CD8-positive, alpha-beta memory T cell (primary cell): ENCODE measurements at regions of chr2 and their contacts with region 1.

Region 1: DNA sequence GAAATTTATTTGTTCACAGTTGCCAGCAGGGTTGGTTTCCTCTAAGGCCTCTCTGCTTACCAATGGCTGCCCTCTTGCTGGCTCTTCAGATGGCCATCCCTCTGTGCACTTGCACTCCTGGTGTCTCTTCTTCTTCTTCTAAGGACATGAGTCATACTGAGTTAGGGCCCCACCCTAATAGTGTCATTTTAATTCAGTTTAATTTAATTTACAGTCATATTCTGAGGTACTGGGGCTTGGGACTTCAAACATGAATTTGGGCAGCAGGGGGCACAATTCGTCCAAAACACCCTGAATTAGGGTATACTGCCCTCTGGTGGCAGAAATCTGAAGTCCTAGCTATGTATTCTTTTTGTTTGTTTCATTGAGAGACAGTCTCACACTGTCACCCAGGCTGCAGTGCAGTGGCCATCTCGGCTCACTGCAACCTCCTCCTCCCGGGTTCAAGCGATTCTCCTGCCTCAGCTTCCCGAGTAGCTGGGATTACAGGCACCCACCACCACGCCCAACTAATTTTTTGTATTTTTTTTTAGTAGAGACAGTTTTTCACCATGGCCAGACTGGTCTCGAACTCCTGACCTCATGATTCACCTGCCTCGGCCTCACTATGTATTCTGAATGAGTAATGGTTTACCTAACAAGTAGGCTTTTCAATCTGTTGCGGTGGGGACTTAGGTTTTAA is 19.8 kb downstream of the SLC4A1AP start:
- DNase-seq: peak; percentile 78 to 85 (median 82)
- H3K4me3 ChIP-seq: no peak overlapping the region
- H3K4me3 Mint-ChIP-seq: peak overlapping the region in 6 of 7 donors; percentile 30 to 82 (median 59)
- H3K27ac ChIP-seq: peak overlapping the region; percentile 1
- H3K27ac Mint-ChIP-seq: peak overlapping the region; percentile 79 to 99 (median 94)
- H3K4me1 ChIP-seq: peaks cover 24% of the 10 kb centered on the region
- H3K4me1 Mint-ChIP-seq: peaks cover 26 to 31% (median 31%) of the 10 kb centered on the region in 3 donors
- H3K27me3 ChIP-seq: no peaks in the 10 kb centered on the region
- H3K27me3 Mint-ChIP-seq: peaks cover 0 to 1% of the 10 kb centered on the region in 2 donors

Region 2: DNA sequence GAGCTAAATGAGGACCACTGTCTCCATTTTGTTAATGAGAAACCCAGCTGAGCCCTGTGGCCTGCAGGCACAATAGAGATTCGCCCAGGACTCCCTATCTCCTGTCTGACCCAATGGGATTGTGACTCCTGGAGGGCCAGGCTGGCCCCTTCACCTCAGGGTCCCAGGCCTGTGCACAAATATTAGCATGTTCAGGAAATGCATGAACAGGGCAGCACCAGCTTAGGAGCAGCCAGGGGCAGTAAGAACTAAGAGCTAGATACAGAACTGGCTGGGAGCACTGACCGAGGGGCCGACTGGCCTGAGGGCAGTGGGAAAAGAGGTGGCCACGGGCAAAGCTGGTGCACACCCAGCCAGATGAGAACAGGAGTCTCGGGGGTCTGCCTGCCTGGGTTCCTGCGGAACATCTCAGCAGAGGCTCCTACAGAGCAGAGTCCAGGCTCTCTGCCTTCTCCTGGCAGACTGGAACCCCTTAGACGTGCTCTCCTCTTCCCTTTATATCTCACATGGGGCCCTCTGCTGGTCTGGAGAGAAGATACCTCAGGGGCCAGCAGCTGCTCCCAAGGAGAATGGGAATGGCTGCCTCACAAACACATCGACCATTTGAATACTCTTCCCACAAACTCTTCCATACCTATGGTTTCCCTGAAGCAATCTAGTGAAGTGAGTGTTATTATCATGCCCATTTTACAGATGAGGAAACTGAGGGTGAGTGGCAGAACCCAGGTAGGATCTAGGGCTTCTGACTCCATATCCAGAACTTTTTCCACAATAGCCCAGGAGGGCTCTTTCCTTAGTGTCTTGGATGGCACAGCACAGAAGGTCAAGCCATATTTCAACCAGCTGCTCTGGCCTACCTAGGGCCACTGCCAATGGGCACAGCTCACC is 1128.0 kb before region 1 on chr2:
- CTCF ChIA-PET with region 1: no interaction called
- POLR2A ChIA-PET with region 1: no interaction called
- DNase-seq: no peak
- H3K4me3 ChIP-seq: no peak overlapping the region
- H3K4me3 Mint-ChIP-seq: no peak overlapping the region
- H3K27ac ChIP-seq: no peak overlapping the region
- H3K27ac Mint-ChIP-seq: no peak overlapping the region
- H3K4me1 ChIP-seq: no peaks in the 10 kb centered on the region
- H3K4me1 Mint-ChIP-seq: no peaks in the 10 kb centered on the region
- H3K27me3 ChIP-seq: no peaks in the 10 kb centered on the region
- H3K27me3 Mint-ChIP-seq: peaks cover 26 to 60% of the 10 kb centered on the region in 2 donors

Region 3: GRCh38 chr2:27335311-27335710 is 348.2 kb before region 1 on chr2:
- CTCF ChIA-PET with region 1: no interaction called
- POLR2A ChIA-PET with region 1: interaction called, 11 read pairs
- DNase-seq: no peak
- H3K4me3 ChIP-seq: no peak overlapping the region
- H3K4me3 Mint-ChIP-seq: no peak overlapping the region
- H3K27ac ChIP-seq: no peak overlapping the region
- H3K27ac Mint-ChIP-seq: peak overlapping the region in 4 of 8 donors; percentile 18 to 32 (median 26)
- H3K4me1 ChIP-seq: no peaks in the 10 kb centered on the region
- H3K4me1 Mint-ChIP-seq: no peaks in the 10 kb centered on the region
- H3K27me3 ChIP-seq: no peaks in the 10 kb centered on the region
- H3K27me3 Mint-ChIP-seq: no peaks in the 10 kb centered on the region

Region 4: GRCh38 chr2:27606611-27607010 is 76.9 kb before region 1 on chr2:
- CTCF ChIA-PET with region 1: no interaction called
- POLR2A ChIA-PET with region 1: no interaction called
- DNase-seq: no peak
- H3K4me3 ChIP-seq: no peak overlapping the region
- H3K4me3 Mint-ChIP-seq: no peak overlapping the region
- H3K27ac ChIP-seq: no peak overlapping the region
- H3K27ac Mint-ChIP-seq: peak overlapping the region in 4 of 8 donors; percentile 26 to 48 (median 44)
- H3K4me1 ChIP-seq: no peaks in the 10 kb centered on the region
- H3K4me1 Mint-ChIP-seq: peaks cover 4 to 9% (median 9%) of the 10 kb centered on the region in 3 donors
- H3K27me3 ChIP-seq: no peaks in the 10 kb centered on the region
- H3K27me3 Mint-ChIP-seq: no peaks in the 10 kb centered on the region

Region 5: GRCh38 chr2:27663463-27664249 is 19.9 kb before region 1 on chr2 and contains the starts of genes SLC4A1AP and SUPT7L:
- CTCF ChIA-PET with region 1: interaction called, 28 read pairs
- POLR2A ChIA-PET with region 1: interaction called, 3 read pairs
- DNase-seq: peak; percentile 59 to 85 (median 80)
- H3K4me3 ChIP-seq: peak within 1 kb of the TSS; percentile 100
- H3K4me3 Mint-ChIP-seq: peak within 1 kb of the TSS; percentile 94 to 100 (median 99)
- H3K27ac ChIP-seq: peak within 1 kb of the TSS; percentile 93
- H3K27ac Mint-ChIP-seq: peak within 1 kb of the TSS; percentile 95 to 100 (median 100)
- H3K4me1 ChIP-seq: peaks cover 40% of the 10 kb centered on the region
- H3K4me1 Mint-ChIP-seq: peaks cover 56 to 72% (median 71%) of the 10 kb centered on the region in 3 donors
- H3K27me3 ChIP-seq: no peaks in the 10 kb centered on the region
- H3K27me3 Mint-ChIP-seq: peaks cover 0 to 1% of the 10 kb centered on the region in 2 donors
- total RNA-seq, gene SLC4A1AP: 28.6 to 29.6 TPM
- total RNA-seq, gene SUPT7L: 31.1 to 33.6 TPM

Region 6: GRCh38 chr2:27672723-27673486 is 10.6 kb before region 1 on chr2:
- CTCF ChIA-PET with region 1: interaction called, 16 read pairs
- POLR2A ChIA-PET with region 1: no interaction called
- DNase-seq: no peak
- H3K4me3 ChIP-seq: no peak overlapping the region
- H3K4me3 Mint-ChIP-seq: no peak overlapping the region
- H3K27ac ChIP-seq: no peak overlapping the region
- H3K27ac Mint-ChIP-seq: peak overlapping the region in 3 of 8 donors; percentile 9 to 73 (median 63)
- H3K4me1 ChIP-seq: no peaks in the 10 kb centered on the region
- H3K4me1 Mint-ChIP-seq: peaks cover 4 to 16% (median 12%) of the 10 kb centered on the region in 3 donors
- H3K27me3 ChIP-seq: no peaks in the 10 kb centered on the region
- H3K27me3 Mint-ChIP-seq: no peaks in the 10 kb centered on the region

Region 7: GRCh38 chr2:27697660-27698059 is 14.1 kb after region 1 on chr2:
- CTCF ChIA-PET with region 1: interaction called, 11 read pairs
- POLR2A ChIA-PET with region 1: no interaction called
- DNase-seq: no peak
- H3K4me3 ChIP-seq: no peak overlapping the region
- H3K4me3 Mint-ChIP-seq: no peak overlapping the region
- H3K27ac ChIP-seq: no peak overlapping the region
- H3K27ac Mint-ChIP-seq: peak overlapping the region in 1 of 8 donors; percentile 15
- H3K4me1 ChIP-seq: no peaks in the 10 kb centered on the region
- H3K4me1 Mint-ChIP-seq: no peaks in the 10 kb centered on the region
- H3K27me3 ChIP-seq: no peaks in the 10 kb centered on the region
- H3K27me3 Mint-ChIP-seq: no peaks in the 10 kb centered on the region

Region 8: DNA sequence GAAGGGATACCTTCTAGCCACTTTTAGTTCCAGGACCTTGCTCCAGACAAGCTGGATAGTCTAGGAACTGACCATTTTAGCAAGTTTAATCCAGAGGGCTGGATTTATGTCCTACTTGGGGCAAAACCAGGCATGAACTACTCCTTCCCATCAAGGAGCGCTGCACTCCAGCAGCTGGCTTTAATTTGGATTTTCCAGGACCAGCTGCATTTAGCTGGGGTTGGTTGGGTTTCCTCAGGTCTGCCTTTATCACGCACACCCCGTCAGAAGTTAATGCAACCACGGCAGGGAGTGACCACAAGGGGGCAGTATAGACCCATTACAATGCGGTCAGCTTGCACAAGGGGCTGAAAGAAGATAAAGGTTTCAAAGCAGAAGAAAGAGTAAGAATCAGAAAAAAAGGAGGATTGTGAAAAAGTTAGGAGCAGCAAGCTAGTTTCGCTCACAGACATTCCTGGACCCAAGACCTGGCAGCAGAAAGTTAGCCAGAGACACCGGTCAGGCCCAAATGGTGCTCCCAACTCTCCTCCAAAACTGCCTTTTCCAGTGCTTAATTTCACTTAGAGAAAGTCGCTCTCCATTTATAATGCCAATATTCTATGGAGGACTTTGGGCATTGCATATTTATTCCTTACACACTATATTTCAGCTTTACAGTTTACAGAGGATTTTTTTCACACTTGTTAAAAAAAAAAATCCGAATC is 20.3 kb after region 1 on chr2:
- CTCF ChIA-PET with region 1: interaction called, 16 read pairs
- POLR2A ChIA-PET with region 1: no interaction called
- DNase-seq: peak; percentile 67 to 86 (median 72)
- H3K4me3 ChIP-seq: no peak overlapping the region
- H3K4me3 Mint-ChIP-seq: no peak overlapping the region
- H3K27ac ChIP-seq: no peak overlapping the region
- H3K27ac Mint-ChIP-seq: peak overlapping the region in 1 of 8 donors; percentile 24
- H3K4me1 ChIP-seq: peaks cover 6% of the 10 kb centered on the region
- H3K4me1 Mint-ChIP-seq: peaks cover 4 to 6% (median 4%) of the 10 kb centered on the region in 3 donors
- H3K27me3 ChIP-seq: no peaks in the 10 kb centered on the region
- H3K27me3 Mint-ChIP-seq: no peaks in the 10 kb centered on the region